ENCODE measurements at regions of chr1 and their contacts with region 1.

Region 1: DNA sequence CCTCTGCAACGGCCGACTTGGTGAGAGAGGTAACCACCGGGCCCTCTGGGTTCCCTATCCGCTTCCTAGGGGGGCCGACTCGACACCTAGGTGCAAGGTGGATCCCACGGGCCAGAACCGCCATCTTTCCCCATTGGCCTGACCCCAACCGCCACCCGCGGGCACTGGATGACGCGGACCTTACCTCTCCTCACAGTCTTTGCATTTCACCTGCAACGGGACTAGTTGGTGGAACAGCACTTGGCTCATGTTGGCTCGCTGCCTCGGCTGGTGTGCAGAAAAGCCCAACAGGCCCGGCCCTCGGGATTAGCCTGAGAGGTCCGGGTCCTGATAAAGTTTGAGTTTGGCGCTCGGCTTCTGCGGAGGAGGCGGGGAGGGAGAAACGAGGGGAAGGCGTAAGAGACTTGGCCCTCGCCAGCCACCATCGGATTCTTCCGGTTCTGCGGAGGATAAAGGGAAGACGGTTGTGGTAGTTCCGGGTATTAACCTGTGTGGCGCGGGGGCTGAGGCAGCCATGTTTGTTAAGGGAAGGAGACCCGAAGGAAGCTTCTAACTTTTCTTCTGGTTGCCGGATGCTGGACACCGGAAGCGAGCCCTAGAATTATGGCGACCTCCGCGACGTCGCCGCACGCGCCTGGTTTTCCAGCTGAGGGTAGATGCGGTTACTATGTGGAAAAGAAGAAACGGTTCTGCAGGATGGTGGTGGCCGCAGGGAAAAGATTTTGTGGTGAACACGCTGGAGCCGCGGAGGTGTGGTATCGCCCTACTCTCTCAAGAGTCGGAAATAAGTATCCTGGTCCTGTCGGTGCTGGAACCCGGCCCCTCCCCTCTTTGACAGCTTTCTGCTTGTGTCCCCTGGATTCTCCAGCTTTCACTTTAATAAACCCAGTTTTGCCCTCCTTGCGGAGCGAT is at the starts of genes SASS6 and TRMT13:
- DNase-seq: peak; percentile 98
- H3K4me3 ChIP-seq: peak within 1 kb of the TSS; percentile 77 to 94 (median 82)
- H3K27ac ChIP-seq: peak within 1 kb of the TSS; percentile 65 to 89 (median 80)
- H3K4me1 ChIP-seq: peaks cover 18 to 62% (median 41%) of the 10 kb centered on the region in 6 donors
- H3K27me3 ChIP-seq: no peaks in the 10 kb centered on the region
- CTCF ChIP-seq: peak in 7 of 11 experiments; percentile 8 to 57 (median 27)
- POLR2A ChIP-seq: peak in 1 of 3 donors; percentile 47
- total RNA-seq, gene SASS6: 3.7 to 9.2 (median 4.6) TPM
- total RNA-seq, gene TRMT13: 20.9 to 37.6 (median 27.9) TPM

Region 2: GRCh38 chr1:99808391-99809115 is 324.3 kb before region 1 on chr1:
- intact Hi-C with region 1: no loop called
- DNase-seq: no peak
- H3K4me3 ChIP-seq: no peak overlapping the region
- H3K27ac ChIP-seq: peak overlapping the region in 1 of 8 donors; percentile 34
- H3K4me1 ChIP-seq: peaks cover 0 to 14% (median 9%) of the 10 kb centered on the region in 6 donors
- H3K27me3 ChIP-seq: peaks cover 0 to 8% (median 0%) of the 10 kb centered on the region in 7 donors
- CTCF ChIP-seq: peak; percentile 43 to 84 (median 69)
- POLR2A ChIP-seq: no peak

Region 3: GRCh38 chr1:100277866-100278265 is 145.0 kb after region 1 on chr1:
- intact Hi-C with region 1: loop called (anchors 10 kb)
- DNase-seq: no peak
- H3K4me3 ChIP-seq: no peak overlapping the region
- H3K27ac ChIP-seq: no peak overlapping the region
- H3K4me1 ChIP-seq: peaks cover 0 to 25% (median 0%) of the 10 kb centered on the region in 6 donors
- H3K27me3 ChIP-seq: no peaks in the 10 kb centered on the region
- CTCF ChIP-seq: peak in 2 of 11 experiments; percentile 9 to 13
- POLR2A ChIP-seq: no peak

Region 4: GRCh38 chr1:100440075-100440809 is 307.4 kb after region 1 on chr1:
- intact Hi-C with region 1: no loop called
- DNase-seq: no peak
- H3K4me3 ChIP-seq: no peak overlapping the region
- H3K27ac ChIP-seq: peak overlapping the region; percentile 53 to 80 (median 62)
- H3K4me1 ChIP-seq: peaks cover 11 to 64% (median 42%) of the 10 kb centered on the region in 6 donors
- H3K27me3 ChIP-seq: no peaks in the 10 kb centered on the region
- CTCF ChIP-seq: no peak
- POLR2A ChIP-seq: no peak